Breast epithelium (tissue), 4 donors: ENCODE measurements at regions of chr1 and their contacts with region 1.

Region 1: DNA sequence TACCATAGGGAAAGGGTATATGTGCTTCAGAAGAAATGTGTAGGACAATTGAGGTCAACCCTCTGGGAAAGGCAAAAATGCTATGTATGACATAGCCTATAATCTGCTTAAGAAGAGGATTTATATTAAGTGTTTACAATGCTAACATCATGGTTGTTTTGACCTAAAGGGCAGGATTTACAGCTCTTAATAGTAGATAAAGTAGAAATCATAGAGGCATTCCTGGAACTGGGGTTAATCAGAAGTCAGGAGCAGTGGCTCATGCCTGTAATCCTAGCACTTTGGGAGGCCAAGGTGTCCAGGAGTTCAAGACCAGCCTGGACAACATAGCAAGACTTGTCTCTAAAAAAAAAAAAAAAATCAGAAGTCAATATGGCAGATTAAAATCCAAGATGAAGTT is 8.7 kb upstream of the RPL11 start:
- DNase-seq: no peak
- H3K4me3 ChIP-seq: no peak overlapping the region
- H3K27ac ChIP-seq: no peak overlapping the region
- H3K4me1 ChIP-seq: no peaks in the 10 kb centered on the region
- H3K27me3 ChIP-seq: no peaks in the 10 kb centered on the region
- CTCF ChIP-seq: no peak
- POLR2A ChIP-seq: no peak

Region 2: DNA sequence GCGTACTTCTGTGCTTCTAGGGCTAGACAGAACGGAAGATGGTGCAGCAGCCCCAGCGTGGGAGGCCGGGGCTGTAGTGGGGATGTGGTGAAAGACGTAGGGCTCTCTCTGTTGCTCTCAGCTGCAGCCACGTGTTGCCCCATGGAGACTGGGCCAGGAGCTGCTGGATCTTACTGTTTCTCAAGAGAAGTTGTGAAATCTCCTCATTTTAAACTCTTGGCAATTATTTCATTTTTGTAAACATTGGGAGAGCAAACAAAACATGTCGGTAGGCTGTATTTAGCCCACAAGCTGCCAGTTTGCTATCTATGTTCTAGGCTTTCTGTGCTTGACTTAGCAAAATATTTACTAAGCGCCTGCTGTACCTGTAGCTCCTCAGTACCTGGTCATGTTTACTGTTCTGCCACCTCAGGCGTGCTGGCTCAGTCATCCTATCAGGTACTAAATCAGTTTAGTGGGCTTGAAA is 44.4 kb after region 1 on chr1:
- intact Hi-C with region 1: loop called (anchors 2 kb)
- DNase-seq: peak in 1 of 2 donors; percentile 67
- H3K4me3 ChIP-seq: peak overlapping the region in 1 of 3 donors; percentile 7
- H3K27ac ChIP-seq: peak overlapping the region; percentile 56 to 75
- H3K4me1 ChIP-seq: no peaks in the 10 kb centered on the region
- H3K27me3 ChIP-seq: no peaks in the 10 kb centered on the region
- CTCF ChIP-seq: no peak
- POLR2A ChIP-seq: no peak